ENCODE measurements at regions of chr19 and their contacts with region 1.

Region 1: DNA sequence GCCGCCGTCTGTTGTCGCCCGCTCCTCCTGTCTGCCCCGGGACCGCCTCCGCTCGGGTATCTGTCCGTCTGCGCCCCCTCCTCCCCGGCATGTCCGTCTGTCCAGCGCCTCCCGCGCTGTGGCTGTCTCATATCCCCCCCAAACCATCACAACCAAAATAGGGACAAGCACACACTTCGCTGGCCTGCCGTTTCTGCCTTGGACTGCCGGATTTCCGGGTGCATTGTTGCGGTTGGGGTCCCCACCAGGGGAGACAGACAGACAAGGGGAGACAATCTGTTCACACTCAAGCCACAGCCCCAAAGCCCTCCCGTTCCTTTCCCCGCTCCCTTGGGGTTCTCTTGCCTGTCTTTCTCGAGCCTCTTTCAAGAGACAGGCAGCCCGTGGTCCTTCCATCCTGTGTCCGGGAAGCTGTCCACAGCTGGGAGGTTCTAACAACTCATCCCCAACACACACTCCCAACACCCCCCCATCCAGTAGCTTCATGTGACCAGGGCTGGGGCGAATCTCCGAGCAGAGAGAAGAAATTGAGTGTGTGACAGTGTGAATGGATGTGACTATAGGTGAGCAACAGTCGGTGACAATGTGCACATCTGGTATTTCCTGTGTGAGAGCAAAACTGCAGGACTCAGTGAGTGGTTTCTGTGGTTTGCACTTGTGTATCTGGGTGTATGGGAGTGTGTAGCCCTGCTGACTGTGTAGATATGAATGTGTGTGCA is 16.5 kb upstream of the FOSB start:
- DNase-seq: peak; percentile 24
- ATAC-seq: no peak; the same call in 1 of the 2 replicates
- H3K4me3 ChIP-seq: peak overlapping the region; percentile 77
- H3K27ac ChIP-seq: peak overlapping the region; percentile 73
- H3K4me1 ChIP-seq: peaks cover 37% of the 10 kb centered on the region
- H3K27me3 ChIP-seq: no peaks in the 10 kb centered on the region
- CTCF ChIP-seq: no peak

Region 2: GRCh38 chr19:45405435-45406225 is 45.7 kb before region 1 on chr19:
- CTCF ChIA-PET with region 1: no interaction called
- POLR2A ChIA-PET with region 1: no interaction called
- intact Hi-C with region 1: no loop called
- DNase-seq: peak; percentile 89
- ATAC-seq: peak; percentile 64
- H3K4me3 ChIP-seq: peak overlapping the region; percentile 97
- H3K27ac ChIP-seq: peak overlapping the region; percentile 92
- H3K4me1 ChIP-seq: peaks cover 24% of the 10 kb centered on the region; the same call in 1 of the 2 replicates
- H3K27me3 ChIP-seq: no peaks in the 10 kb centered on the region
- CTCF ChIP-seq: no peak

Region 3: DNA sequence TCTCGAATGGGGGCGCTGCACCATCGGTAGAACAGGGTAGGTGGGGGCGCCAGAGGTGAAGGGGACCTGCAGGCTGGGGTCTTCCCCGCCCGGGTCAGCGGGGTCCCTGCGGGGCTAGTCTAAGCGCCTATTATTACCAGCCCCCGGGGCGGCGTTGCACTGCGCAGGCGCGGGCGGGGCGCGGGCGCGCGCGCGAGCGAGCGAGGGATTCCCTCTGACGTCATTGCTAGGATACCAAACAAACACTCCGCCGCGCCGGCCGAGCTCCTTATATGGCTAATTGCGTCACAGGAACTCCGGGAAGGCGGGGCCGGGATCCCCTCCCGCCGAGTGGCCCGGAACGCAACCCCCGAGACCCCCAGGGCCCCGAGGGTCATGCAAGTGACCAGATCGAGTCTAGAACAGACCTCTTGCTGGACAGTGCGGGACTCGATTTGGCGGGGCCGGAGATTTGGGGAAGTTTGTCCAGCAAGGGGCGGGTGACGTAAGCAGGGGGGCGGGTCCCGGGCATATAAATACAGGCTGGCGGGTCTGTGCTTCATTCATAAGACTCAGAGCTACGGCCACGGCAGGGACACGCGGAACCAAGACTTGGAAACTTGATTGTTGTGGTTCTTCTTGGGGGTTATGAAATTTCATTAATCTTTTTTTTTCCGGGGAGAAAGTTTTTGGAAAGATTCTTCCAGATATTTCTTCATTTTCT is 16.3 kb after region 1 on chr19 and contains the start of gene FOSB:
- CTCF ChIA-PET with region 1: no interaction called
- POLR2A ChIA-PET with region 1: interaction called, 8 read pairs
- intact Hi-C with region 1: loop called (anchors 2 kb)
- DNase-seq: peak; percentile 91
- ATAC-seq: peak; percentile 7; the same call in 1 of the 2 replicates
- H3K4me3 ChIP-seq: peak within 1 kb of the TSS; percentile 79
- H3K27ac ChIP-seq: peak within 1 kb of the TSS; percentile 81
- H3K4me1 ChIP-seq: peaks cover 11% of the 10 kb centered on the region
- H3K27me3 ChIP-seq: no peaks in the 10 kb centered on the region
- CTCF ChIP-seq: 0 out of 2 replicates have a peak, but pooled peaks have one; percentile 11
- total RNA-seq, gene FOSB: 35.8 and 60.5 TPM in 2 replicates

Region 4: DNA sequence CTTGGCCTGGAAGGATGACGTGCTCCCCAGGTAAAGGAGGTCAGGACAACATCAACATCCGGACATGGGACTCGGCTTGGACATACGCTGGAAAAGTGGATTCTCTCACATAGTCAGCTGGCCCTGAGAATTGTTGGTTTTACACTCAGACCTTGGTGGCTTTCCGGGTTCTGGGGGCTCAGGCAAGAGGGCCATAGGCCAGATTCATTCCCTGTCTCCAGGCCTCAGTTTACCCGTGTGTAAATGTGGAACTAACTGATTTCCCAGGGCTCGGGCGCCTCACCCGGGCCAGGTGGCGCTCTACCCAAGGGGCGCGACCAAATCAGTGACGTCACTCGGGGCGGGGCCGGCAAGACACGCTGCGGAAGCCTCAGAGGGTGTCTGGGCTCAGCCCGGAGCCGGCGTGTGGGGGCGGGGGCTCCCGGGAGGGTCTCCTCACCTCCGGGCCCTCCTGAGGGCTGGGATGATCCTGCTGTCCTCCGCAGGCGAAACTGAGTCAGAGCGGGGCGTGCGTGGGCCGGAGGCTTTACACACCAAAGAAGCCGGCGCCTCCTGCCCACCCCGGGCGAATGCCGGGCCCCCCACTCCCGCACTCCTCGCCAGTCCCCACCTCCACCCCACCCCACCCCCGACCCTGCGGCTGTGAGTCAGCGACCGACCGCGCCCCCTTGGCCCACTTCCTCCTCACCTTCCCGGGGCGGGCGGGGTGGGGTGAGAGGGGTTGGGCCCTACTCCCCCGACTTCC is 55.1 kb after region 1 on chr19:
- CTCF ChIA-PET with region 1: no interaction called
- POLR2A ChIA-PET with region 1: no interaction called
- intact Hi-C with region 1: no loop called
- DNase-seq: peak; percentile 86
- ATAC-seq: peak; percentile 70
- H3K4me3 ChIP-seq: peak overlapping the region; percentile 99
- H3K27ac ChIP-seq: peak overlapping the region; percentile 79
- H3K4me1 ChIP-seq: peaks cover 21% of the 10 kb centered on the region
- H3K27me3 ChIP-seq: no peaks in the 10 kb centered on the region
- CTCF ChIP-seq: peak; percentile 67